Colonic mucosa (tissue), 4 donors: ENCODE measurements at regions of chr11 and their contacts with region 1.

Region 1: DNA sequence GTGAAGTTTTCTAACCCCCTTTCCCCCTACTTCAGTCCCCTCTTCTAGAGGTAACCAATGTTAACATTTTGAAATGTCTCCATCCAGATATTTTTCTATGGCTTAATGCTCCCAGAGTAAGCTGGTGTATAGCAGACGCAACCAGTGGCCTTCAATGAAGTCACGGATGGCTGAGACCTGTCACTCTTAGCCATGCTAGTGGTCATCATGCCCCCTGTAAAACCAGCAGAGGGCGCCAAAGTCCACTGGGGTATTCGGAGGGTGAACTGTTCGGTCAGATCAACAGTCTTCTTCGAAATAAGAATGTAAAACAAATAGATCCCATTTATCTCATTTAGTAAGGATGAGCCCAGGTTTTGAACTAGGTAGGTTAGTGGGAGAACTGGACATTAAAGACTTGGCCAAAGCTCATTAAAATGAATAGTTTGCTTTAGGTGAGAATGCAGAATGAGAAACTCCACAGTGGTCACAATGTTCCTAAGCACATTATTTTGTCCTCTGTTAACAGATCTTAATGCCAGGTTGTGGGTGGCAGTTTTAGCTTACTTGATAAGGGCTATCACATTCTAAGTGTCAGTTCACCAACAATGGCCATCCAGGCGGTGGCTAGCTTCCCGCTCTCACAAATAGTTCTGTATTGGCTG is 8.6 kb upstream of the MMP8 start:
- DNase-seq: peak; percentile 82
- H3K4me3 ChIP-seq: no peak overlapping the region
- H3K27ac ChIP-seq: no peak overlapping the region
- H3K4me1 ChIP-seq: no peaks in the 10 kb centered on the region
- H3K27me3 ChIP-seq: no peaks in the 10 kb centered on the region
- CTCF ChIP-seq: peak; percentile 79

Region 2: GRCh38 chr11:103055221-103055890 is 322.0 kb after region 1 on chr11:
- intact Hi-C with region 1: loop called (anchors 5 kb)
- DNase-seq: no peak
- H3K4me3 ChIP-seq: no peak overlapping the region
- H3K27ac ChIP-seq: no peak overlapping the region
- H3K4me1 ChIP-seq: no peaks in the 10 kb centered on the region
- H3K27me3 ChIP-seq: no peaks in the 10 kb centered on the region
- CTCF ChIP-seq: peak; percentile 54